ENCODE measurements at regions of chr5 and their contacts with region 1.

Region 1: DNA sequence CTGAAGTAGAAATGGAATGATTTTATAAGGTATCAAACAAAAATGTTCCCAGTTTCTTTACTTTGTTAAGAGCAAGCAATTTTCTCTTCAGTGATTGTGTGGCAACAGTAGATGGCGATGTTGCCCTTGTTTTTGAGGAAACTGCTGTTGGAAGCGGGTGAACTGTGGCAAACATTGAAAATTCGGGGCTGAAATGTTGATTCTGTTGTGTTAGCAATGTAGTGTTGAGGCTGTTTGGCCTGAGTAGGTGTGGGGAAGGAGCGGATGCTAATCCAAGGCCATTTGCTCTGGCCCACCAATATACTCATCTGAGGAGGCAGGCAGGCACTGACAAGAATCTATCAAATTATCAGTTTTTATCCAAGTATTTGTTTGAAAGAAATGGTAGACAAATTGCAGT is 129.8 kb downstream of the SLC12A2 start:
- DNase-seq: no peak
- ATAC-seq: no peak

Region 2: DNA sequence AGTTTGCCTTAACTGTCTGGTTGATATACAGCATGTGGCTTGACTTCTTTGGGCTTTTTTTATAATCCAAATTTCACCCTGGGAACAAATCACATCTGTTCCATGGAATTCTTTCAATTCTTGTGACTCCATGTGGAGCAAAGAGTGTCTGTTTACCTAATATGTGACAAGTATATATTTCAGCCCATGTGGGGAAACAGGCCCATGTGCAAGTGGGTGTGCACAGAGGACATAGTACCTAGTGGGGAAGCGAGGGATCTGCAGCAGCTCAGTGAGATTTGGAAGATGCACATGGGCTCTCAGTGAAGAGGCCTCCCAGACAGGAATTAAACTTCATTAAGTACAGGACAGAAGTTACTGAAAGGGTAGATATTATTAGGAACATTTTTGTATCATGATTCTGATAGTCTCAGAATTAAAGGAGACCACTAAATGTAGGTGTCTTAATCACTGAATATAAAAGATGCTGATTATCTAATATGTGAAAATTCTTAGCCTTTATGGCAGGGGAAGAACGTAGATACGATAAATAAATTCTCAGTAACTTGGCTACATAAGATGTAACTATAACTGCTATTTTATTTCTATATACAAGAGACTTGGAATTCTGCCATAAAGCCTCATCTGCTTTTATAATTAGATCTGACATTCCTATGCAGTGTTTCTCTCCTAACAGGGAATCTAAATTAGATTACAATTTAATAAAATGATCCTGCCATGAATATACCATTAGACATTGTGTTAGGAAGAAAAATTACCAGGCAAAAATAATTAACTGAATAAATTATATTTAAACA is 51.4 kb after region 1 on chr5:
- intact Hi-C with region 1: loop called (anchors 10 kb)
- DNase-seq: no peak
- ATAC-seq: peak; percentile 48

Region 3: GRCh38 chr5:128334010-128334716 is 120.8 kb after region 1 on chr5:
- intact Hi-C with region 1: loop called (anchors 10 kb)
- DNase-seq: no peak
- ATAC-seq: no peak

Region 4: DNA sequence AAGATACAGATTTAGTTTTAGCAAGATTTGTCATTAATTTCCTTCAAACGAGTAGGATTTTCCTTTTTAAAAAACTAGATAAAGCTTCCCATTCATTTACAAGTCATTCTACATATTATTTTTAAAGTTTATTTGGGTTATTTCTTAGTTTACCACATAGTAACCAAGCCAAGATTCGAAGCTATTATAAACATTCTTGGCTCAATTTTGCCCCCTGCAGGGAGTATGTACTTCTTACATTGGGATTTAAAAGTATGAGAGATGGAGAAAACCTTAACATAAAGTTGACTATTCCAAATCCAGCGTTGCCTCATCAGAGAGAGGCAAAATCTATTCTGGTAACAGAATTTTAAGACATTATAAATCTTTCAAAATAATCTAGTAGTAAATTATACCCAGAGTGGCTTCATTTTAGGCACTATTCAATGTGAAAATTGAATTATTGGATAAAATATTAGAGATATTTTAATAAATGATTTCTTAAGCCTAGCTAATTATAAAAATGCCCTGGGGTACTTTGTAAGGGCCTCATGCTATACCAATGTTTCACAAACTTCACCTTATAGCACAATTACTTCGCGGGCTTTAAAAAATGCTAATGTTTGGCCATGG is 285.6 kb after region 1 on chr5:
- intact Hi-C with region 1: loop called (anchors 2 kb)
- DNase-seq: no peak
- ATAC-seq: no peak

Region 5: GRCh38 chr5:128674825-128675446 is 461.6 kb after region 1 on chr5:
- intact Hi-C with region 1: loop called (anchors 5 kb)
- DNase-seq: no peak
- ATAC-seq: no peak

Region 6: GRCh38 chr5:128844354-128844923 is 631.1 kb after region 1 on chr5:
- intact Hi-C with region 1: loop called (anchors 2 kb)
- DNase-seq: no peak
- ATAC-seq: no peak

Measured in Right ventricle myocardium inferior (tissue), 1 donor.